AG04449 (cell line): ENCODE measurements at regions of chr17 and their contacts with region 1.

Region 1: GRCh38 chr17:42067351-42068091 is 17.1 kb upstream of the C17orf113 start:
- DNase-seq: no peak
- H3K4me3 ChIP-seq: no peak overlapping the region
- CTCF ChIP-seq: peak; percentile 89

Region 2: DNA sequence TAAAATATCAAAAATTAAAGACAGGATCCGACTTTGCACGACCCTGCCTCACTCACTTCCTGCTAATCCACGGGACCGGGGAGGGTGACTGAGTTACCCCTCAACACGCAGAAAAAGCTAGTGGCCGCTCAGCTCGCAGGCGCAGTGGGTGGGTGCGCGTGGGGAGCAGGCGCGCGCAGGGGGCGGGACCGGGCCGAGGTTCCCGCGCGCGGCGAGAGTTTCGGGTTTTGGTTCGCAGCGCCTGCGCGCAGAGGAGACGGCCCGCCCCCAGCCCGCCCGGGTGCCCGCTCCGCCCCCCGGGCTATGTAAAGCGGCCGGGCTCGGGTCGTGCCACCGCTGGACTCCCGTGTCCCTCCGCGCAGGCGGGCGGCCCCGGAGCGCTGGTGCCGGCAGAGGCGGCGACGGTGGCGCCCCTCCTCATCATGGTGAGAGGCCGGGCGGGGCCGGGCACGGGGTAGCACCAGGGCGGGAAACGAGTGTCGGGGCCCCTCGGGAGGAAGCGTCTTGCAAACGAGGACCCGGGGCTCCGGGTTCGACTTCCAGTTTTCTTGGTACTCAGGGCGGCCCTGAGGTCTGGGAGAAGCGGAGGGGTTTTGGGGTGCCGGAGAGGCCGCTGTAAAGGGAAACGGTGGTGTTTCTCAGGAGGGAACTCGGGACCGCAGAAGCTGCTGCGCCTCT is 100.9 kb before region 1 on chr17 and contains the start of gene CNP:
- CTCF ChIA-PET with region 1: interaction called, 12 read pairs
- POLR2A ChIA-PET with region 1: no interaction called
- DNase-seq: no peak
- H3K4me3 ChIP-seq: peak within 1 kb of the TSS; percentile 81
- CTCF ChIP-seq: no peak

Region 3: GRCh38 chr17:42039794-42040763 is 27.4 kb before region 1 on chr17:
- CTCF ChIA-PET with region 1: interaction called, 10 read pairs
- POLR2A ChIA-PET with region 1: no interaction called
- DNase-seq: no peak
- H3K4me3 ChIP-seq: no peak overlapping the region
- CTCF ChIP-seq: no peak

Region 4: DNA sequence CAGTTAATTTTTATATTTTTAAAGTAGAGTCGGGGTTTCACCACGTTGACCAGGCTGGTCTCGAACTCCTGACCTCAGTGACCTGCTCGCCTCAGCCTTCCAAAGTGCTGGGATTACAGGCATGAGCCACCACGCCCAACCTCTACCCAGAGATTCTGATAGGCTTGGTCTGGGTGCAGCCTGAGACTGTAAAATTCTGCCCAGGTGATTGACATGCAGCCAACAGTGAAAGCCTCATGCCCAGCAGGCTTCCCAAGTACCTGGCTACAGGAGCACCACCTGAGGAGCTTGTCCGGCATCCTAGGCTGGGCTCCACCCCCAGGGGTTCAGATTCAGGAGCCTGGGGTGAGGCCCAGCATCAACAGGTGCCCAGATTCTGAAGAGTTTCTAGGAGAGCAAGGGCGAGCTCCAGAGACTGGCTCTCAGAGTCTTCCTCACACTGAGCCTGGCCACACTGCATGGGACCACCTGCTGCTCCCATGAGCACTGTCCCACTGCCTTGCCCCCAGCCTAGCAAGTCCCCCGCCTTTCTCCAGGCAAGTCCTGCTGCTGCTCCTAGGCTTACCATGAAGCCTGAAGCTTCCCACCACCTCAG is 14.1 kb after region 1 on chr17:
- CTCF ChIA-PET with region 1: interaction called, 35 read pairs
- POLR2A ChIA-PET with region 1: no interaction called
- DNase-seq: no peak
- H3K4me3 ChIP-seq: no peak overlapping the region
- CTCF ChIP-seq: no peak

Region 5: GRCh38 chr17:42101513-42102319 is 34.2 kb after region 1 on chr17:
- CTCF ChIA-PET with region 1: interaction called, 23 read pairs
- POLR2A ChIA-PET with region 1: no interaction called
- DNase-seq: no peak
- H3K4me3 ChIP-seq: no peak overlapping the region
- CTCF ChIP-seq: peak; percentile 77

Region 6: DNA sequence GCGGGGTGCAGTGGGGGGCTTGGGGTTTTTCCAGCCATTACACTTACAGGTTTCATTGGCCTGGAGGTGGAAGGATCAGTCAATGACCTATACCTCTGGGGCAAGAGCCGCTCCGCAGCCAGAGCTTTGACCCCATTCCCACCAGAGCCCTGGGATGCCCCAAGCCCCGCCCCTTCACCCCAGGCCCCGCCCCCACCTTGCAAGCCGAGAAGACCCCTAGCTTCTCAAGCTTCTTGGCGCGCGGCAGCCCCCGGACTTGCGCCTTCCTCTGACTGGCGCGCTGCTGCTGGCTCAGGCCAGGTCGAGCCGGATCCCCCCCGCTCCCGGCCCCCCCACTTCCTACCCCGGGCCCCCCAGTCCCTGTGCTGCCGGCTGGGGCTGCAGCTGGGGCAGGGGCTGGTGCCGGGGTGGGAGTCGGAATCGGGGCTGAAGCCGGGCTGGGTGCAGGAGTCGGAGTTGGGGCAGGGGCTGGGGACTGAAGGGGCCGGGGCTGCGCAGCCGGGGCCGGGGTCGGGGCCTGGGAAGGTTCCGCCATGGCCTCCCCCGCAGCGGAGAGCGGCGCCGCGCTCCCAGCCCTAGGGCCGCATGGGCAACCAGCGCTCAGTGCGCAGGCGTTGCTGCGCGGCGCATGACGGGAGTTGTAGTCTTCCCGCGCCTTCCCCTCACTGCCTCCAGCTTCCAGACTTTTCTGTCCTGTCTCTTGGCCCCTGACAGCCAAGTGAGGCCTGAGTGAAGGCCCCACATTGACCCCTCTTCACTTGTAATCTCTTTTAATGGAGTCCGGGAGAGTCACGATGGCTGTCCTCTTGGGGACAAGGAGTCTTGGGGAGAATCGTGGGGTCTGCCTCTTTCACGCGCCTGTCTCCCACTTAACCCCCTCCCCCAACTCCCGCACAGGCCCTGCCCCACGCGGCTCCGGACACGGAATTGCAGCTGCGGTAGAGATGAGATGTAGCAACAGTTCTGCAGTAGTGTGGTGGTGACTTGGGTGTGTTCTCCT is 53.5 kb after region 1 on chr17 and contains the start of gene KAT2A:
- CTCF ChIA-PET with region 1: interaction called, 43 read pairs
- POLR2A ChIA-PET with region 1: no interaction called
- DNase-seq: no peak
- H3K4me3 ChIP-seq: peak within 1 kb of the TSS; percentile 62
- CTCF ChIP-seq: no peak

Region 7: GRCh38 chr17:42276359-42276608 is 208.8 kb after region 1 on chr17 and contains the start of gene STAT5B:
- CTCF ChIA-PET with region 1: no interaction called
- POLR2A ChIA-PET with region 1: no interaction called
- DNase-seq: no peak
- H3K4me3 ChIP-seq: peak within 1 kb of the TSS; percentile 76
- CTCF ChIP-seq: no peak